ENCODE measurements at regions of chr9 and their contacts with region 1.

Region 1: GRCh38 chr9:88578121-88579054 is 43.4 kb downstream of the NXNL2 start:
- DNase-seq: peak; percentile 66
- H3K4me3 ChIP-seq: peak overlapping the region in 1 of 3 experiments; percentile 29
- H3K27ac ChIP-seq: no peak overlapping the region
- H3K4me1 ChIP-seq: peaks cover under 1% of the 10 kb centered on the region
- H3K27me3 ChIP-seq: no peaks in the 10 kb centered on the region
- CTCF ChIP-seq: peak; percentile 78 to 94

Region 2: GRCh38 chr9:87834357-87834756 is 744.0 kb before region 1 on chr9:
- CTCF ChIA-PET with region 1: no interaction called
- dilution Hi-C with region 1: no loop called
- in situ Hi-C with region 1: no loop called
- intact Hi-C with region 1: no loop called
- DNase-seq: no peak
- H3K4me3 ChIP-seq: no peak overlapping the region
- H3K27ac ChIP-seq: no peak overlapping the region
- H3K4me1 ChIP-seq: no peaks in the 10 kb centered on the region
- H3K27me3 ChIP-seq: no peaks in the 10 kb centered on the region
- CTCF ChIP-seq: no peak

Region 3: DNA sequence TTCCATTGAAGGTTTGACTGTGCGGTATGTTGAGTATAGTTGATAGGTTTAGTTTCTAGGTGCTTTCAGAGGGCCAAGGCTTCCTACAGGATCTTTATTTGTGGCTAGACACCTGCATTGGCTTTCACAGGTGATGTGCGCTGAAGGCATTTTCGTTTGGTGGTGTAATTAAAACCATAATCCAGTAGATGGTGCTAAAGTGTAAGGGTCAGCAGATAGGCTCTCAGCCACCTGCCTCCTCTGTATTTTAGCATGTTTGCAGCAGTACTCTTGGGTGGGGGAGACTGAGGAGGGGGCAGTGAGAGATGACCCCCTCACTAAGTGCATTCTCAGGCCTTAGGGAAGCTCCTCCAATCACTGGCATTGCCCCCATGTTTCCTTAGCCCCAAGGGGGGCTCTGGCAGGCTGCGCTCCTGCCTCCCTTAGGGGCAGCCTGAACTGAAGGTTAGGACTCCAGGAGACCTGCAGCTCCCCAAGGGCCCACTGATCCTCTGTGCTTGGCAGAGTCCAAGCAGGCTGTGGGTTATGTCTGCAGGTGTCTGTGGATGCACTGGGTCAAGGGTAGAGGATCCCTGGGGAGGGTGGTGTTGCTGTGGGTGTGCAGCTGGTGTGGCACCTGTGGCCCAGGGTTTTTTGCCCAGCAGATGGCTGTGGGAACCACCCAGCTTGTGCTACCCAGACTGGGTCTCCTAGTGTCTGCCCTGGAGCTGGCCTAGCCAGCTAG is 627.5 kb before region 1 on chr9:
- CTCF ChIA-PET with region 1: no interaction called
- dilution Hi-C with region 1: no loop called
- in situ Hi-C with region 1: loop called in 1 of 2 experiments (anchors 10 kb)
- intact Hi-C with region 1: loop called (anchors 1 kb)
- DNase-seq: peak; percentile 43
- H3K4me3 ChIP-seq: no peak overlapping the region
- H3K27ac ChIP-seq: no peak overlapping the region
- H3K4me1 ChIP-seq: no peaks in the 10 kb centered on the region
- H3K27me3 ChIP-seq: no peaks in the 10 kb centered on the region
- CTCF ChIP-seq: peak; percentile 61 to 75

Region 4: GRCh38 chr9:88106491-88106890 is 471.9 kb before region 1 on chr9:
- CTCF ChIA-PET with region 1: no interaction called
- dilution Hi-C with region 1: no loop called
- in situ Hi-C with region 1: no loop called
- intact Hi-C with region 1: loop called (anchors 1 kb)
- DNase-seq: peak; percentile 40
- H3K4me3 ChIP-seq: no peak overlapping the region
- H3K27ac ChIP-seq: no peak overlapping the region
- H3K4me1 ChIP-seq: no peaks in the 10 kb centered on the region
- H3K27me3 ChIP-seq: no peaks in the 10 kb centered on the region
- CTCF ChIP-seq: peak; percentile 64 to 73

Region 5: GRCh38 chr9:88280816-88281382 is 297.5 kb before region 1 on chr9:
- CTCF ChIA-PET with region 1: interaction called, 12 read pairs
- dilution Hi-C with region 1: no loop called
- in situ Hi-C with region 1: no loop called
- intact Hi-C with region 1: no loop called
- DNase-seq: no peak
- H3K4me3 ChIP-seq: no peak overlapping the region
- H3K27ac ChIP-seq: no peak overlapping the region
- H3K4me1 ChIP-seq: peaks cover 6% of the 10 kb centered on the region
- H3K27me3 ChIP-seq: no peaks in the 10 kb centered on the region
- CTCF ChIP-seq: no peak

Region 6: DNA sequence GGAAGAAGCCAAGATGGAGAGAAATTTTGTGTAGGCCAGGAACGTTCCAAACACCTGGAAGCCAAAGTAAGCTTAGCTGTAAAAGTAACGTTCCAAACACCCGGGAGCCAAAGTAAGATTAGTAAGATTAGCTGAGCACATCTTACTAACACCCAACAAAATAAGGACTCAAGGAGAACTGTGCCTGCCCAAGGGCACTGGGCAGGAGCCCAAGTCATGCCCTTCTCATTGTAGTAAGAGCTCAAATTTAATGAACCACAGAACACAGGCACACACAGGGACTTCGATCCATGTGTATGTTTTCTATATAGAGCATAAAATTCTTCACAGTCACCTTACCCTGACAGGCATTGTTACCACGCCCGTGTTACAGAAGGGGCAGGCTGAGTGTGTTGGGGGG is 79.5 kb before region 1 on chr9:
- CTCF ChIA-PET with region 1: no interaction called
- dilution Hi-C with region 1: no loop called
- in situ Hi-C with region 1: no loop called
- intact Hi-C with region 1: loop called (anchors 10 kb)
- DNase-seq: no peak
- H3K4me3 ChIP-seq: no peak overlapping the region
- H3K27ac ChIP-seq: no peak overlapping the region
- H3K4me1 ChIP-seq: no peaks in the 10 kb centered on the region
- H3K27me3 ChIP-seq: no peaks in the 10 kb centered on the region
- CTCF ChIP-seq: no peak

Region 7: GRCh38 chr9:88747768-88748167 is 169.4 kb after region 1 on chr9:
- CTCF ChIA-PET with region 1: no interaction called
- dilution Hi-C with region 1: no loop called
- in situ Hi-C with region 1: no loop called
- intact Hi-C with region 1: no loop called
- DNase-seq: peak; percentile 79
- H3K4me3 ChIP-seq: no peak overlapping the region
- H3K27ac ChIP-seq: no peak overlapping the region
- H3K4me1 ChIP-seq: peaks cover 13% of the 10 kb centered on the region
- H3K27me3 ChIP-seq: no peaks in the 10 kb centered on the region
- CTCF ChIP-seq: peak in 1 of 2 donors; percentile 8

Region 8: DNA sequence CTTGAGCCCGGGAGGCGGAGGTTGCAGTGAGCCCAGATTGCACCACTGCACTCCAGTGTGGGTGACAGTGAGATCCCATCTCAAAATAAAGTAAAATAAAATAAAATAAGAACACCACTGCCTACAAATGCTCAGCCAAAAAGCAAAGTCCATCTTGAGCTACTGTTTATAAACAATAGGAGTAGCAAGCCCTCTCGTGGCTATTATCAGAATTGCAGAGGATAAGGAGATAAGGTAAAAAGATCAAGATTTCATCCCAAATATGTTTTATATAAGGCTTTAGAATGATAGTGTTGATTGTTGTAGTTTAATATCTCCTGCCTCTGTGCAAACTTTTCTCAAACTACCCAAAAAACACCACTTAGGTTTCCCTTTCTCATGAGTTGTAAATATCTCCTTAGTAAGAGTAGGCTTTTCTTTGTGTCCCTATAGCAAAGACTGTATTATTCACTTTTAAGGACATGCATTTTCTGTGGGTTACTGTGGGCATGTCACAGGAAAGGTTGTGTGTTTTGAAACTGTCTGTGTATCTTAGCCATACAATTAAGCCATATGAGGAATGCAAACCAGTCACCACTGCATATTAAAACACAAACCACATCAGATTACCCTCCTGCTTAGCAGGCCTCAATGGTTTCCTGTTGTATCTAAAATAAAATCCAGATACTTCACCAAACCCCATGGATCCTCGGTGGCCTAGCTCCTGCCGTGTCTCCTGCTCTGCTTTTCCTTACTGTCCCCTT is 700.8 kb after region 1 on chr9:
- CTCF ChIA-PET with region 1: no interaction called
- dilution Hi-C with region 1: no loop called
- in situ Hi-C with region 1: loop called in 1 of 2 experiments (anchors 25 kb)
- intact Hi-C with region 1: no loop called
- DNase-seq: peak; percentile 49
- H3K4me3 ChIP-seq: no peak overlapping the region
- H3K27ac ChIP-seq: no peak overlapping the region
- H3K4me1 ChIP-seq: peaks cover 7% of the 10 kb centered on the region
- H3K27me3 ChIP-seq: no peaks in the 10 kb centered on the region
- CTCF ChIP-seq: peak; percentile 73 to 84